ENCODE measurements at regions of chr6 and their contacts with region 1.

Region 1: GRCh38 chr6:74091136-74091793 is 395.3 kb downstream of the CD109 start:
- DNase-seq: no peak
- H3K4me3 ChIP-seq: no peak overlapping the region
- H3K27me3 ChIP-seq: no peaks in the 10 kb centered on the region
- CTCF ChIP-seq: peak; percentile 62

Region 2: GRCh38 chr6:74075323-74075722 is 15.9 kb before region 1 on chr6:
- CTCF ChIA-PET with region 1: interaction called, 11 read pairs
- POLR2A ChIA-PET with region 1: no interaction called
- DNase-seq: no peak
- H3K4me3 ChIP-seq: no peak overlapping the region
- H3K27me3 ChIP-seq: no peaks in the 10 kb centered on the region
- CTCF ChIP-seq: no peak

Region 3: GRCh38 chr6:74114428-74114827 is 23.2 kb after region 1 on chr6:
- CTCF ChIA-PET with region 1: interaction called, 10 read pairs
- POLR2A ChIA-PET with region 1: no interaction called
- DNase-seq: no peak
- H3K4me3 ChIP-seq: no peak overlapping the region
- H3K27me3 ChIP-seq: 0 out of 2 replicates have a peak, but pooled peaks cover 2% of the 10 kb centered on the region
- CTCF ChIP-seq: no peak

Measured in BJ (cell line).